MCF 10A (cell line): ENCODE measurements at regions of chr4 and their contacts with region 1.

Region 1: GRCh38 chr4:173168396-173169177 is at the start of gene GALNT7:
- DNase-seq: peak; percentile 73
- H3K4me3 Mint-ChIP-seq: peak within 1 kb of the TSS; percentile 100
- H3K27ac Mint-ChIP-seq: peak within 1 kb of the TSS; percentile 59
- H3K4me1 Mint-ChIP-seq: peaks cover 21% of the 10 kb centered on the region
- H3K27me3 Mint-ChIP-seq: no peaks in the 10 kb centered on the region
- CTCF ChIP-seq: no peak
- total RNA-seq, gene GALNT7: 13.7 and 19.9 TPM in 2 replicates

Region 2: GRCh38 chr4:173025131-173025530 is 143.5 kb before region 1 on chr4:
- CTCF ChIA-PET with region 1: interaction called, 64 read pairs
- POLR2A ChIA-PET with region 1: interaction called, 7 read pairs
- intact Hi-C with region 1: loop called (anchors 1 kb)
- DNase-seq: peak; percentile 81
- H3K4me3 Mint-ChIP-seq: no peak overlapping the region
- H3K27ac Mint-ChIP-seq: no peak overlapping the region
- H3K4me1 Mint-ChIP-seq: no peaks in the 10 kb centered on the region
- H3K27me3 Mint-ChIP-seq: no peaks in the 10 kb centered on the region
- CTCF ChIP-seq: peak; percentile 74

Region 3: DNA sequence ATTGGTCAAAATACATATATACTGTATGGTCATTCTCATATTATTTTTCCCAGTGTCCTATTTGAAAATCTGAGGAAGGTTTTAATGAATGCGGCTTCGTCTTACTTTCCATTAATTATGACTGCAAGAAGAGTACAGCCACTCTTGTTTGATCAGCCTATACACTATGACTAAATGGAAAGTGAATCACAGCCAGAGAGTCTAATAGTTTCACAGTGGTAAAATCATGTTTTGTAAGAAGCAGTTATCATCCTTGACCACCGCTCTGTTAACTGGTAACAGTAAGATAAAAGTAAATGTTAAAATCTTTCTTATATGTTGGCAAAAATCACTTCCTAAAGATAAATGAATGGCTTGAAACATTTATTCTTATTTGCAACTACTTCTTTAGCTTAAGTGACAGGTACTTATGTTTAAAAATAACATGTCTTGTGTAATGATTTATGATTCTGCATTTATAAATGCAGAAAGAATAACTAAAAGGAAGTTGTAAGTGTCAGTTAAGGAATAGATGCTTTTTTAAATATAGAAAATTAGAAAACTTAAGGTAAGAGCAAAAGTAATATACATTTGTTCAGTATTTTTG is 13.3 kb after region 1 on chr4:
- CTCF ChIA-PET with region 1: interaction called, 14 read pairs
- POLR2A ChIA-PET with region 1: interaction called, 18 read pairs
- intact Hi-C with region 1: loop called (anchors 2 kb)
- DNase-seq: peak; percentile 47
- H3K4me3 Mint-ChIP-seq: no peak overlapping the region
- H3K27ac Mint-ChIP-seq: peak overlapping the region; percentile 31
- H3K4me1 Mint-ChIP-seq: peaks cover 22% of the 10 kb centered on the region
- H3K27me3 Mint-ChIP-seq: no peaks in the 10 kb centered on the region
- CTCF ChIP-seq: no peak

Region 4: GRCh38 chr4:173231916-173232315 is 63.3 kb after region 1 on chr4:
- CTCF ChIA-PET with region 1: interaction called, 4 read pairs
- POLR2A ChIA-PET with region 1: interaction called, 5 read pairs
- intact Hi-C with region 1: loop called (anchors 1 kb)
- DNase-seq: peak; percentile 49
- H3K4me3 Mint-ChIP-seq: no peak overlapping the region
- H3K27ac Mint-ChIP-seq: peak overlapping the region; percentile 36
- H3K4me1 Mint-ChIP-seq: peaks cover 2% of the 10 kb centered on the region
- H3K27me3 Mint-ChIP-seq: no peaks in the 10 kb centered on the region
- CTCF ChIP-seq: peak; percentile 44

Region 5: GRCh38 chr4:173252024-173252935 is 83.7 kb after region 1 on chr4:
- CTCF ChIA-PET with region 1: interaction called, 27 read pairs
- POLR2A ChIA-PET with region 1: interaction called, 21 read pairs
- intact Hi-C with region 1: loop called (anchors 1 kb)
- DNase-seq: peak; percentile 98
- H3K4me3 Mint-ChIP-seq: no peak overlapping the region
- H3K27ac Mint-ChIP-seq: peak overlapping the region; percentile 63
- H3K4me1 Mint-ChIP-seq: peaks cover 28% of the 10 kb centered on the region
- H3K27me3 Mint-ChIP-seq: no peaks in the 10 kb centered on the region
- CTCF ChIP-seq: no peak